CD14-positive monocyte (primary cell): ENCODE measurements at regions of chr21 and their contacts with region 1.

Region 1: DNA sequence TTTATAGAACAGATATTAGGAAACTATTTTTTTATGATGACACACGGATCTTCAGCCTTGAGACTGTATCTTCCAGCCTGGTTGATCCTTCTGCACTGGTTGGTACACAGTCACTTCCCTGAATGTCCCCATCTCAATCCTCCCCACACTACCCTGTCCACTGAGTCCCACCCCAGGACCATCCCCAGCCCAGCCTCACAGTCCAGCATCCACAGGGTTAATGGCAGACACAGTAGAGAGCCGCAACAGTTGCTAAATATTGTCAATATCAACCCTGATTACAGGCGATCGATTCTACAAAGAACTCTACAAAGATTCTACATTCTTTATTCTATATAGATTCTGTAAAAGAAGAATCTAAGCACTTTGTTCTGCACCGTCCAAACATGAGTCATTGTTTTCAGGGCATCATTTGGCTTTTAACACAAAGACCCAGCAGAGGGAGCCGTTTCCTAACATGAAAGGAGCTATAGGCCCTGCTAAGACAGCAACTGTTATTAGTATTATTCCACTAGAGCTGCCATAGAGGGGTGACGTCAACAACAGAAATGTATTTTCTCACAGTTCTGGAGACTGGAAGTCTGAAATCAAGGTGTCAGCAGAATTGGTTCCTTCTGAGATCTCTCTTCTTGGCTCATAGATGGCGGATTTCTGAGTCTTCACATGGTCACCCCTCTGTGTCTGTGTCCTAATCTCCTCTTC is 30.1 kb upstream of the IFNAR2 start:
- DNase-seq: peak; percentile 95 to 98 (median 98)
- H3K4me3 ChIP-seq: peak overlapping the region in 1 of 3 experiments; percentile 34
- H3K4me3 Mint-ChIP-seq: peak overlapping the region in 1 of 2 donors; percentile 74
- H3K27ac ChIP-seq: peak overlapping the region; percentile 74 to 91
- H3K27ac Mint-ChIP-seq: peak overlapping the region; percentile 93 to 99 (median 98)
- H3K4me1 ChIP-seq: peaks cover 61 to 73% of the 10 kb centered on the region in 2 donors
- H3K4me1 Mint-ChIP-seq: peaks cover 66% of the 10 kb centered on the region
- H3K27me3 ChIP-seq: no peaks in the 10 kb centered on the region
- H3K27me3 Mint-ChIP-seq: peaks cover 0 to 8% (median 6%) of the 10 kb centered on the region in 3 donors
- CTCF ChIP-seq: peak; percentile 80

Region 2: DNA sequence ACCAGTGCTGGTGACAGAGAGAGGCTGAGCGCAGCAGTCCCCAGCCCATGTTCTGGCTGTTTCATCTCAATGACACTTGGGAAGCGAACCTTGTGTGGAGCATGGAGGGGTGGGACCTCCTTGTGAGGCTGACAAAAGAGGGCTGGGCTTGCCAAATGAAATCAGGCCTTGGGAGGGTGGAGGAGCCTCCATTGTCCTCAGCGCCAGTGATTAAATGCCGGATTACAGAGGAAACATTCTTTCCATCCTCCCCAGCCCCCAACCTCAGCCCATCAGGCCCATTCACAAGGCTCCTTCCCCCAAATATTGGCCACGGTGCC is 364.8 kb before region 1 on chr21:
- intact Hi-C with region 1: loop called in 1 of 2 experiments (anchors 10 kb)
- DNase-seq: no peak
- H3K4me3 ChIP-seq: no peak overlapping the region
- H3K4me3 Mint-ChIP-seq: no peak overlapping the region
- H3K27ac ChIP-seq: no peak overlapping the region
- H3K27ac Mint-ChIP-seq: no peak overlapping the region
- H3K4me1 ChIP-seq: no peaks in the 10 kb centered on the region
- H3K4me1 Mint-ChIP-seq: peaks cover 3% of the 10 kb centered on the region
- H3K27me3 ChIP-seq: no peaks in the 10 kb centered on the region
- H3K27me3 Mint-ChIP-seq: peaks cover 3 to 7% (median 5%) of the 10 kb centered on the region in 3 donors
- CTCF ChIP-seq: no peak

Region 3: GRCh38 chr21:33025489-33026442 is 173.9 kb before region 1 on chr21 and contains the start of gene OLIG2:
- intact Hi-C with region 1: loop called in 1 of 2 experiments (anchors 10 kb)
- DNase-seq: peak; percentile 60 to 71 (median 63)
- H3K4me3 ChIP-seq: peak within 1 kb of the TSS in 1 of 3 experiments; percentile 69
- H3K4me3 Mint-ChIP-seq: peak within 1 kb of the TSS; percentile 75 to 87
- H3K27ac ChIP-seq: no peak within 1 kb of the TSS
- H3K27ac Mint-ChIP-seq: peak within 1 kb of the TSS; percentile 18 to 91 (median 53)
- H3K4me1 ChIP-seq: peaks cover 72 to 79% of the 10 kb centered on the region in 2 donors
- H3K4me1 Mint-ChIP-seq: peaks cover 79% of the 10 kb centered on the region
- H3K27me3 ChIP-seq: peaks cover 61 to 96% of the 10 kb centered on the region in 2 donors
- H3K27me3 Mint-ChIP-seq: peaks cover 91 to 99% (median 94%) of the 10 kb centered on the region in 3 donors
- CTCF ChIP-seq: no peak
- polyA plus RNA-seq, gene OLIG2: 0.20 TPM in 1 of 3 donors, not detected in the others

Region 4: DNA sequence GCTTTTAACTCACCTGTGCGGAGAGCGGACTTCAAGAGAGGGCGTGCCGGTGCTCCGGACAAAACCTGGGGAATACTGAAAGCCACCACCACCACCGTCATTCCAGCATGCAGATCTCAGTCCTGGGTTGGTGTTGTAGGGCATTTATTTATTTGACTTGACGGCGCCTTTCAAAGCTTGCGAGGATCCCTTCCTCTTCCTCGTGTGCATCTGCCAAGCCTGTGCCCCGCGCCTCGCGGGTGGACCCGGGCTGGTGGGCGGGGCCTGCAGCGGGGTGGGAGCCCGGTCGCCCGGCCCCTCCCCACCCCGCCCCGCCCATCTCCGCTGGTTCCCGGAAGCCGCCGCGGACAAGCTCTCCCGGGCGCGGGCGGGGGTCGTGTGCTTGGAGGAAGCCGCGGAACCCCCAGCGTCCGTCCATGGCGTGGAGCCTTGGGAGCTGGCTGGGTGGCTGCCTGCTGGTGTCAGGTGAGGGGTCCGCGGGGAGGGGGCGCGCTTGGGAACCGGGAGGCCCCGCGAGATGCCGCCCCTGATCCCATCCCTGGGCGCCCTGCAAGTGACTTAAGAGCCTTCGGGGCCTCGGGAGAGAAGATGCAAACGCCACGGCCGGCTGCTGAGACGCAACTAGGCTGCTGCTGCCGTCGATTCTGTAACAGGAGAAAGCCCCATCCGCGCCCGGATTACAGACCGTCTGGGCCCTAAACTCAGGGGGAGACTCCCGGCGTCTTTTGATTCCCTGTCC is 66.6 kb after region 1 on chr21 and contains the start of gene IL10RB:
- intact Hi-C with region 1: loop called (anchors 2 to 5 kb)
- DNase-seq: peak; percentile 76 to 87 (median 84)
- H3K4me3 ChIP-seq: peak within 1 kb of the TSS; percentile 64 to 88 (median 81)
- H3K4me3 Mint-ChIP-seq: peak within 1 kb of the TSS; percentile 98 to 99
- H3K27ac ChIP-seq: peak within 1 kb of the TSS; percentile 99 to 100
- H3K27ac Mint-ChIP-seq: peak within 1 kb of the TSS; percentile 98 to 100 (median 100)
- H3K4me1 ChIP-seq: peaks cover 83 to 96% of the 10 kb centered on the region in 2 donors
- H3K4me1 Mint-ChIP-seq: peaks cover 83% of the 10 kb centered on the region
- H3K27me3 ChIP-seq: no peaks in the 10 kb centered on the region
- H3K27me3 Mint-ChIP-seq: peaks cover 0 to 1% (median 0%) of the 10 kb centered on the region in 3 donors
- CTCF ChIP-seq: no peak
- polyA plus RNA-seq, gene IL10RB: 79.0 to 225 (median 212) TPM

Region 5: DNA sequence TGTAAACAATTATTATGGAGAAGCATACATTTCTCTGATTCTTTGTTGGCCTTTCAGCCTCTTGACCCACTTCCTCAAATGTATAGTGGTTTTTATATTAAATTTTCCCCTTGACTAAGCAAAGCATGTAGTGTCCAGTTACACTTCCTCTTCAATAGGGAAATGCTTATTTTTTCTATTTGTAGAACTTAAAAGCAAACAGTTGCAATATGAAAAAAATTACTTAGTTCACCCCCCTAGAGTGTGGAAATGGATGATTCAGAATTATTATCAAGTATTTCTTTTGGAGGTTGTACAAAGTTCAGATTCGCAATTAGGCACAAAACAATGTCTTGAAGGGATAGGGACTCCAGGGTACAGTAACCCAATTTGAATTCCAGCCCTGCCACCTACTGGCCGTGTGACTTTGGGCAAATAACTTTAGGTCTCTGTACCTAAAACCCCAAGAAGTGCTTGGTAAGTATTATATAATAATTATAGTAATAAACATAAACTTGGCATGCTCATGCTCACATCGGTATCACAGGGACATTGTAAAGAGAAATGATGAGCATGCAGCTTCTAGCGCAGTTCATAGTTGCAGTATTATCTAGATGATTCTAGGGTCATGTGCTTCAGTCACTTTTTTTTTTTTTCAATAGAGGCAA is 174.9 kb after region 1 on chr21:
- intact Hi-C with region 1: loop called (anchors 1 to 10 kb)
- DNase-seq: peak; percentile 90 to 94 (median 93)
- H3K4me3 ChIP-seq: peak overlapping the region in 1 of 3 experiments; percentile 55
- H3K4me3 Mint-ChIP-seq: peak overlapping the region; percentile 22 to 27
- H3K27ac ChIP-seq: peak overlapping the region; percentile 77 to 93
- H3K27ac Mint-ChIP-seq: peak overlapping the region; percentile 94 to 98 (median 96)
- H3K4me1 ChIP-seq: peaks cover 76 to 86% of the 10 kb centered on the region in 2 donors
- H3K4me1 Mint-ChIP-seq: peaks cover 66% of the 10 kb centered on the region
- H3K27me3 ChIP-seq: no peaks in the 10 kb centered on the region
- H3K27me3 Mint-ChIP-seq: no peaks in the 10 kb centered on the region
- CTCF ChIP-seq: peak; percentile 84

Region 6: DNA sequence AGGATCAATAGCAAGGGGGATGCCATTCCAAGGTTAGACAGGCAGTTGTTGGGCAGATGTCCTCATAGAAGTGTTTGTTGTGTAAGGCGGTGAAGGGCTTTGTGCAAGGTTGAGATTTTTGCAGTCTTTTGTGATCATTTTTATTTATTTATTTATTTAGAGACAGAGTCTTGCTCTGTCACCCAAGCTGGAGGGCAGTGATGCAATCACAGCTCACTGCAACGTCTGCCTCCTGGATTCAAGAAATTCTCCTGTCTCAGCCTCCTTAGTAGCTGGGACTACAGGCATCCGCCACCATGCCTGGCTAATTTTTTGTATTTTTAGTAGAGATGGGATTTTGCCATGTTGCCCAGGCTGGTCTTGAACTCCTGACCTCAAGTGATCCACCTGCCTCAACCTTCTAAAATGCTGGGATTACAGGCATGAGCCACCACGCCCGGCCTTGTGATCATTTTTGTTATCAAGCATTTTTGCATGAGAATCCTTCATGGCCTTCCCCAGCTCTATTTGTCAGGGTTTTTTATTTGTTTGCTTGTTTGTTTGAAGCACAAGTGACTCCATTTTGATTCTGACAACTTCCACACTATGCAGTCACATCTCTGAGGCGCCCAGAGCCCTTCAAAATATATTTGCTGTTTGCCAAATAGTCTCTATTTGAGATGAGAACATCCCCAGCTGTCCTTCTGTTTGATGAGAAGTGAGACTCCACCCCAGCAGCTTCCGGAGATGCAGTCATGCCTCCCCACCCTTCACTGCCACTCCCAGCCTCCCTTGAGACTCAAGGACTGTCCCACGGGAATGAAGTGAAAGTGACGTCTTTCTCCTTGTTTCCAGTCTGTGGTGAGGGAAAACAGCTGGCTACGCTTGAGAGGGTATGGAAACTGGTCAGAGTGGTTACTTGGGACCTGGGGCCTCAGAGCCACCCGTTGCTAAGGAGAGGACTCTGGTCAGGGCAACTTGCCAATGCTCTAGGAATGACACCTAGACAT is 242.1 kb after region 1 on chr21:
- intact Hi-C with region 1: loop called (anchors 5 kb)
- DNase-seq: peak in 2 of 3 donors; percentile 14 to 28
- H3K4me3 ChIP-seq: no peak overlapping the region
- H3K4me3 Mint-ChIP-seq: no peak overlapping the region
- H3K27ac ChIP-seq: peak overlapping the region in 1 of 2 donors; percentile 53
- H3K27ac Mint-ChIP-seq: peak overlapping the region in 6 of 7 donors; percentile 5 to 80 (median 38)
- H3K4me1 ChIP-seq: peaks cover 7 to 23% of the 10 kb centered on the region in 2 donors
- H3K4me1 Mint-ChIP-seq: peaks cover 20% of the 10 kb centered on the region
- H3K27me3 ChIP-seq: no peaks in the 10 kb centered on the region
- H3K27me3 Mint-ChIP-seq: peaks cover 0 to 1% (median 0%) of the 10 kb centered on the region in 3 donors
- CTCF ChIP-seq: no peak